Activated CD8-positive, alpha-beta memory T cell treated with anti-CD3 and anti-CD28 coated beads, Interleukin-2, amount 10 ng/mL, durations not matched to agents 7 days and 5 days (primary cell): ENCODE measurements at regions of chr17 and their contacts with region 1.

Region 1: DNA sequence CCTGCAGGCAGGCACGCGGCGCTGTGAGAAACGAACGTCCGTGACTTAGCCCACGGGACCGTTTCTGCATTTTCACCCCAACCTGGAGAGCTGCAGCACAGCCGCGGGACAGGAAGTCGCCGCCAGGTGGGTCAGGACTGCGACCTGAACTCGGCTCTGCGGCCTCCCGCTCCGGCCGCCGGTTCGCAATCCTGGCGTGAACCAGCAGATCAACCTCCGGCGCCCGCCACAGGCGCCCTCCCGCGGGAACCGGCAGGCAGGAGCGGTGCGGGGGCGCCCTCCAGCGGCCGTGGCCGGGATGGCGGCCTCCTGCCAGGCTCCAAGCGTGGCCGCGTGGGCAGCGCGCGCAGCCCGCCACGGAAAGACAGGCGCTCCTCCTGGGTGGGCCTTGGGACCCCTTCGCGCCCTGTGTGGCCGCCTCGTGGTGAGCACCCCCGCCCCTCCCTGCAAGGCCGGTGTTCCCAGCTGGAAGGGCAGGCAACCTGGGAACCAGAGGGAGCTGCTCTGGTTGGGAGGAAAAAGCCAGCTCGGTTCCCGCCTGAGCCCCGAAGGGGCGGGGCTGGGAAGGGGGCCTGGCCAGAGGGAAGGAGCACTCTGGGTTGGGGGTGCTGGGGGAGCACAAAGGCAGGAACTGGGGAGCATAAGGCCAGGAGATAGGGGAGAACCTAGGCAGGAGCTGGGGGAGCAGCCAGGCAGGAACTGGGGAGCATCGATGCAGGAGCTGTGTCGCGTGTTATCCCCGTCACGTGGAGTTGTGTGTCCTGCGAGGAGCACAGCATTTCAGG is 28.2 kb downstream of the ACTG1 start:
- DNase-seq: peak; percentile 90
- ATAC-seq: peak; percentile 73
- H3K4me3 Mint-ChIP-seq: peak overlapping the region; percentile 7
- H3K27ac Mint-ChIP-seq: no peak overlapping the region
- H3K4me1 Mint-ChIP-seq: peaks cover 13% of the 10 kb centered on the region
- H3K27me3 Mint-ChIP-seq: peaks cover 40% of the 10 kb centered on the region

Region 2: GRCh38 chr17:81253358-81254131 is 230.8 kb before region 1 on chr17:
- CTCF ChIA-PET with region 1: interaction called, 22 read pairs
- DNase-seq: peak; percentile 66
- ATAC-seq: peak; percentile 61
- H3K4me3 Mint-ChIP-seq: no peak overlapping the region
- H3K27ac Mint-ChIP-seq: peak overlapping the region; percentile 6
- H3K4me1 Mint-ChIP-seq: peaks cover 4% of the 10 kb centered on the region
- H3K27me3 Mint-ChIP-seq: no peaks in the 10 kb centered on the region

Region 3: GRCh38 chr17:81291662-81292061 is 192.7 kb before region 1 on chr17:
- CTCF ChIA-PET with region 1: interaction called, 12 read pairs
- DNase-seq: peak; percentile 74
- ATAC-seq: peak; percentile 37
- H3K4me3 Mint-ChIP-seq: peak overlapping the region; percentile 38
- H3K27ac Mint-ChIP-seq: no peak overlapping the region
- H3K4me1 Mint-ChIP-seq: peaks cover 51% of the 10 kb centered on the region
- H3K27me3 Mint-ChIP-seq: no peaks in the 10 kb centered on the region

Region 4: GRCh38 chr17:81397314-81398175 is 86.8 kb before region 1 on chr17:
- CTCF ChIA-PET with region 1: interaction called, 16 read pairs
- DNase-seq: no peak
- ATAC-seq: no peak
- H3K4me3 Mint-ChIP-seq: peak overlapping the region; percentile 5
- H3K27ac Mint-ChIP-seq: peak overlapping the region; percentile 47
- H3K4me1 Mint-ChIP-seq: peaks cover 25% of the 10 kb centered on the region
- H3K27me3 Mint-ChIP-seq: peaks cover 62% of the 10 kb centered on the region

Region 5: GRCh38 chr17:81508639-81509206 is 24.3 kb after region 1 on chr17:
- CTCF ChIA-PET with region 1: interaction called, 12 read pairs
- DNase-seq: no peak
- ATAC-seq: no peak
- H3K4me3 Mint-ChIP-seq: peak overlapping the region; percentile 99
- H3K27ac Mint-ChIP-seq: peak overlapping the region; percentile 89
- H3K4me1 Mint-ChIP-seq: peaks cover 19% of the 10 kb centered on the region
- H3K27me3 Mint-ChIP-seq: peaks cover 7% of the 10 kb centered on the region

Region 6: GRCh38 chr17:81514739-81515529 is 30.5 kb after region 1 on chr17:
- CTCF ChIA-PET with region 1: interaction called, 15 read pairs
- DNase-seq: peak; percentile 79
- ATAC-seq: peak; percentile 47
- H3K4me3 Mint-ChIP-seq: peak overlapping the region; percentile 94
- H3K27ac Mint-ChIP-seq: peak overlapping the region; percentile 89
- H3K4me1 Mint-ChIP-seq: peaks cover 34% of the 10 kb centered on the region
- H3K27me3 Mint-ChIP-seq: no peaks in the 10 kb centered on the region